Transverse colon (tissue), 4 donors: ENCODE measurements at regions of chr6 and their contacts with region 1.

Region 1: GRCh38 chr6:29809249-29809648 is 18.4 kb upstream of the HLA-G start:
- DNase-seq: no peak
- H3K4me3 ChIP-seq: no peak overlapping the region
- H3K27ac ChIP-seq: no peak overlapping the region
- H3K4me1 ChIP-seq: no peaks in the 10 kb centered on the region
- H3K27me3 ChIP-seq: peaks cover 17% of the 10 kb centered on the region
- CTCF ChIP-seq: no peak
- EP300 ChIP-seq: no peak
- POLR2A ChIP-seq: no peak

Region 2: GRCh38 chr6:29496961-29497360 is 312.3 kb before region 1 on chr6:
- in situ Hi-C with region 1: no loop called
- intact Hi-C with region 1: loop called (anchors 5 kb)
- DNase-seq: no peak
- H3K4me3 ChIP-seq: no peak overlapping the region
- H3K27ac ChIP-seq: no peak overlapping the region
- H3K4me1 ChIP-seq: no peaks in the 10 kb centered on the region
- H3K27me3 ChIP-seq: peaks cover 4% of the 10 kb centered on the region
- CTCF ChIP-seq: no peak
- EP300 ChIP-seq: no peak
- POLR2A ChIP-seq: no peak

Region 3: DNA sequence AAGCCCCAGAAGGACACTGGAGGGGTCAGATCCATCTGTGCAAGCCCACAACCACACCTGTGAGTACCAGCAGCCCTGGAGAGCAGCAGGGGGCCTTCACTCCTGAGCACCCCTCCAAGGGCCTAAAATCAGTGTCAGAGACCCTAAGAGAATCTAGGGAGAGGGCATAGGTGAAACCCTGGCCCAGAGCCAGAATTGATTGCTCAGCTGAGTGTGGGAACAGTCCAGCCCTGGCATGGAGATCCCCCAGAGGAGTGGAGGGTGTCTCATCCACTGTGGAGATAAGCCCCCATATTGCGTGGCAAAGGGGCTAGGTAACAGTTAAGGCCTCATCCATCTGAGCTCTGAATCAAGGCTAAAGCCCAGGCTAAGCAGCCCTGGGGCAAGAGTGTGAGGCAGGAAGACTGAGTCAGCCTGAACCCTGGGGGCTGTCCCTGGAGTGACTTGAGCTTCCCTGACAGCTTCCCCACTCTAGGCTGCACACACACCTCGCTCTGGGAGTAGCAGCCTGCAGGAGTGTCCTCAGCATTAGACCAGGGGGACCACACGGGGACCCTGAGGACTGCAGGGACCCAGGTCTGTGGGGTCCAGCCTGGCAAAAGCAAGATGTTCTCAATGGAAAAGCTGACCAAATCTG is 277.7 kb before region 1 on chr6:
- in situ Hi-C with region 1: no loop called
- intact Hi-C with region 1: no loop called
- DNase-seq: no peak
- H3K4me3 ChIP-seq: no peak overlapping the region
- H3K27ac ChIP-seq: no peak overlapping the region
- H3K4me1 ChIP-seq: no peaks in the 10 kb centered on the region
- H3K27me3 ChIP-seq: no peaks in the 10 kb centered on the region
- CTCF ChIP-seq: no peak
- EP300 ChIP-seq: no peak
- POLR2A ChIP-seq: no peak